ENCODE measurements at regions of chr14 and their contacts with region 1.

Region 1: GRCh38 chr14:101823511-101824120 is 62.1 kb downstream of the PPP2R5C start:
- DNase-seq: peak; percentile 75
- H3K4me3 Mint-ChIP-seq: peak overlapping the region; percentile 75
- H3K27ac Mint-ChIP-seq: peak overlapping the region; percentile 97
- H3K4me1 Mint-ChIP-seq: peaks cover 80% of the 10 kb centered on the region
- H3K27me3 Mint-ChIP-seq: no peaks in the 10 kb centered on the region

Region 2: GRCh38 chr14:101254805-101255764 is 568.5 kb before region 1 on chr14:
- intact Hi-C with region 1: no loop called
- DNase-seq: peak; percentile 4
- H3K4me3 Mint-ChIP-seq: no peak overlapping the region
- H3K27ac Mint-ChIP-seq: no peak overlapping the region
- H3K4me1 Mint-ChIP-seq: peaks cover 12% of the 10 kb centered on the region
- H3K27me3 Mint-ChIP-seq: no peaks in the 10 kb centered on the region

Region 3: DNA sequence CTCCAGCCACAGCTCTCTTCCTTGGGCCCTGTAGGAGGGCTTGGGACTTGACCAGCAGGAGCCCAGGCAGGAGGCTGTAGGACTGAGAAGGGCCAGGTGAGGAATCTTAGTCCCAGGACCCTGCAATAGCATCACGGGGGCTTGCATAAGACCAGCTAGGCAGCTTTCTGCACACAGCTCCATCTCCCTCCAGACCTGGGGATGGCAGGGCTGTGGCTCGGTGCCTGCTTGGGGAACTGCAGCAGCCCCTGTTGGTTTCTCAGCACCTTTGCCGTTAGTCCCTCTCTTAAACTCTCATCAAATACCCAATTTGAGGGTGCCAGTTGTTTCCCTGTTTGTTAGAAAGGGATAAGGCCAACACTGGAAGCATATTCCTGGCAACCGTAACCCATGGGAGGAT is 248.0 kb before region 1 on chr14:
- intact Hi-C with region 1: no loop called
- DNase-seq: no peak
- H3K4me3 Mint-ChIP-seq: no peak overlapping the region
- H3K27ac Mint-ChIP-seq: no peak overlapping the region
- H3K4me1 Mint-ChIP-seq: no peaks in the 10 kb centered on the region
- H3K27me3 Mint-ChIP-seq: peaks cover 2% of the 10 kb centered on the region

Region 4: GRCh38 chr14:101721951-101722661 is 101.5 kb before region 1 on chr14:
- intact Hi-C with region 1: loop called (anchors 2 kb)
- DNase-seq: peak; percentile 79
- H3K4me3 Mint-ChIP-seq: peak overlapping the region; percentile 76
- H3K27ac Mint-ChIP-seq: peak overlapping the region; percentile 98
- H3K4me1 Mint-ChIP-seq: peaks cover 42% of the 10 kb centered on the region
- H3K27me3 Mint-ChIP-seq: no peaks in the 10 kb centered on the region

Region 5: GRCh38 chr14:101774006-101774795 is 49.4 kb before region 1 on chr14:
- intact Hi-C with region 1: loop called (anchors 5 kb)
- DNase-seq: no peak
- H3K4me3 Mint-ChIP-seq: no peak overlapping the region
- H3K27ac Mint-ChIP-seq: no peak overlapping the region
- H3K4me1 Mint-ChIP-seq: peaks cover 12% of the 10 kb centered on the region
- H3K27me3 Mint-ChIP-seq: peaks cover 2% of the 10 kb centered on the region

Region 6: GRCh38 chr14:101809671-101810514 is 13.7 kb before region 1 on chr14:
- intact Hi-C with region 1: loop called (anchors 1 kb)
- DNase-seq: peak; percentile 84
- H3K4me3 Mint-ChIP-seq: peak overlapping the region; percentile 94
- H3K27ac Mint-ChIP-seq: peak overlapping the region; percentile 99
- H3K4me1 Mint-ChIP-seq: peaks cover 49% of the 10 kb centered on the region
- H3K27me3 Mint-ChIP-seq: no peaks in the 10 kb centered on the region

Region 7: DNA sequence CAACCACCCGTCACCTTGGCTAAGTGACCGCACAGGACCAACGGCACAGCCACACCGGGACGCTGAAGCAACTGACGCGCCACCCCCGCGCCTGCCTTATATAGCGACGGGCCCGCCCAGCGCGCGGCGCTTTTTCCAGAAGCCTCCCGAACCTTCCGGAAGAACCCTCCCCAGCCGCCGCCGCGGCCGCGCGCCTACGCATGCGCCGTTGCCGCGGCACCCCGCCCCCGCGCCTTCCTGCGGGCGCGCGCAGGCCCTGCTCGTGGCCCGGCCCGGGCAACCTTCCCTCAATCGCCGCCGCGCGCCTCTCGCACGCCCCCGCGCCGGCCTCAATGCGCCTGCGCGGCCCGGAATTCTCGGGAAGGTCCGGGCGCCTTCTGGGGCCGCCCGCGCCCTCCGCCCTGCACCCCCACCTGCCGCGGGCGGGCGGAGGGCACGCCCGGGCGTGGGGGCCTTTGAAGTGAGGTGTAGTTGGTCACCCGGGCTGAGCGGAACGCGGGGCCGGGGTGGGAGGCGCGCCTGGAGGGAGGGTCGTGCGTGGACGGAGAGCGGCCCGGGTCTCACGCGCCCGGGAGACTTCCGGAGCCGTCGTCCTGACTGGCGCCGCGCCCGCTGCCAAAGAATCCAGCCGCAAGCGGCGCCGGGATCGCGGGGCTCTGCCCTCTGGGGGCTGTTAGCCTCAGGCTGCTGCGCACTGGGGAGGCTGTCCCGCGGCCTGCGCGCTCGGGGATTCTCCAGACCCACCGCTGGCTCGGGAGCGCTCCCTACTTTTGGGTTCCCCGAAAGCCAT is 263.6 kb after region 1 on chr14 and contains the start of gene HSP90AA1:
- intact Hi-C with region 1: loop called (anchors 5 kb)
- DNase-seq: peak; percentile 94
- H3K4me3 Mint-ChIP-seq: peak within 1 kb of the TSS; percentile 90
- H3K27ac Mint-ChIP-seq: peak within 1 kb of the TSS; percentile 93
- H3K4me1 Mint-ChIP-seq: peaks cover 49% of the 10 kb centered on the region
- H3K27me3 Mint-ChIP-seq: no peaks in the 10 kb centered on the region
- total RNA-seq, gene HSP90AA1: 995 and 1,017 TPM in 2 replicates